SK-N-SH (cell line): ENCODE measurements at regions of chr5 and their contacts with region 1.

Region 1: GRCh38 chr5:10689391-10690081 is 71.5 kb downstream of the DAP start:
- DNase-seq: peak; percentile 60
- H3K4me3 ChIP-seq: no peak overlapping the region
- H3K27ac ChIP-seq: peak overlapping the region; percentile 28 to 92; a peak in 3 of 4 replicates
- H3K4me1 ChIP-seq: peaks cover 18 to 29% of the 10 kb centered on the region in 2 experiments
- H3K27me3 ChIP-seq: no peaks in the 10 kb centered on the region
- CTCF ChIP-seq: peak; percentile 44; the same call in 1 of the 2 replicates
- EP300 ChIP-seq: no peak
- RAD21 ChIP-seq: peak; percentile 51

Region 2: GRCh38 chr5:10679336-10679988 is 10.1 kb before region 1 on chr5:
- CTCF ChIA-PET with region 1: interaction called, 16 read pairs
- POLR2A ChIA-PET with region 1: no interaction called
- DNase-seq: no peak
- H3K4me3 ChIP-seq: no peak overlapping the region
- H3K27ac ChIP-seq: no peak overlapping the region
- H3K4me1 ChIP-seq: peaks cover 0 to 17% of the 10 kb centered on the region in 2 experiments; a peak in 1 of 4 replicates
- H3K27me3 ChIP-seq: no peaks in the 10 kb centered on the region
- CTCF ChIP-seq: no peak
- EP300 ChIP-seq: no peak
- RAD21 ChIP-seq: no peak

Region 3: GRCh38 chr5:10701567-10702039 is 12.1 kb after region 1 on chr5:
- CTCF ChIA-PET with region 1: interaction called, 25 read pairs
- POLR2A ChIA-PET with region 1: no interaction called
- DNase-seq: peak; percentile 76
- H3K4me3 ChIP-seq: no peak overlapping the region
- H3K27ac ChIP-seq: peak overlapping the region in 1 of 2 experiments; percentile 57; a peak in 2 of 4 replicates
- H3K4me1 ChIP-seq: peaks cover 24 to 34% of the 10 kb centered on the region in 2 experiments; a peak in 3 of 4 replicates
- H3K27me3 ChIP-seq: no peaks in the 10 kb centered on the region
- CTCF ChIP-seq: peak; percentile 61
- EP300 ChIP-seq: no peak
- RAD21 ChIP-seq: peak; percentile 54